ENCODE measurements at regions of chr2 and their contacts with region 1.

Region 1: DNA sequence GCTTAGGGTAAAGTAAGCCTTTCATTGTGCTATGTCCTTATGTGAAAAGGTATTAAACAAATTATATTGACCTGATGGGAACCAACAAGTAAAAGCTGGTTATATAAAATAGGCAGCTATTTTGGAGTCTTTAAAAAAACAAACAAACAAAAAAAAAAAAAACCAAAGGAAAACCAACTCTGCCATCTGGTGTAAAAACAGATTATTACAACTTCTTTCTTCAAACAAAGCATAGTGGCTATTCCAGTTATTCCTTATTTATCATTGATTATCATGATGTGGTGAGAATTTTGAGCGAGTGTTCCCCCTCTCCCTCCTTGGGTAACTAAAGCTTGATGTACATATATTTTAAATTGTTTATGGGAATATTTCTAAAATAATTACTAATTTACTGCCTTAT is 122.4 kb upstream of the FHL2 start:
- DNase-seq: no peak

Region 2: DNA sequence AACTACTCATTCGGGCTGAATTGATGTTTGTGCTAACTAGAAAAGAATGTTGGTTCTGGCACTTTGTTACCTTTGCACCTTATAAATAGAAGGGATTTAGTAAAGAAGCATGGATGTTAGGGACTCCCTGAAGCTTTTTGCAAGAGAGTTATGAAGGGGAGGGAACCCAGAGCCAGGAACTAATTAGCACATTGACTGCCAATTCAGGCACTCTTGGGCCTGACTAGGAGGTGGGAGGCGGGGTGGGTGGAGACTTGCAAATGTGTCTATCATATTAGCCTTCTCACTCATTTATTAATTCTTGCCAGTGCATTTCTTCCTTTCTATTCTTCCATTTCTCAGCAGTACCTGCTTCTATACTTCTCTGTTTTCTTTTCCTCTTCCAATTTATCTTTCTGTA is 1736.9 kb before region 1 on chr2:
- intact Hi-C with region 1: no loop called
- DNase-seq: no peak

Region 3: GRCh38 chr2:104983980-104984379 is 537.2 kb before region 1 on chr2:
- intact Hi-C with region 1: no loop called
- DNase-seq: no peak

Region 4: GRCh38 chr2:105344704-105345345 is 176.4 kb before region 1 on chr2:
- intact Hi-C with region 1: loop called (anchors 5 to 10 kb)
- DNase-seq: no peak

Region 5: DNA sequence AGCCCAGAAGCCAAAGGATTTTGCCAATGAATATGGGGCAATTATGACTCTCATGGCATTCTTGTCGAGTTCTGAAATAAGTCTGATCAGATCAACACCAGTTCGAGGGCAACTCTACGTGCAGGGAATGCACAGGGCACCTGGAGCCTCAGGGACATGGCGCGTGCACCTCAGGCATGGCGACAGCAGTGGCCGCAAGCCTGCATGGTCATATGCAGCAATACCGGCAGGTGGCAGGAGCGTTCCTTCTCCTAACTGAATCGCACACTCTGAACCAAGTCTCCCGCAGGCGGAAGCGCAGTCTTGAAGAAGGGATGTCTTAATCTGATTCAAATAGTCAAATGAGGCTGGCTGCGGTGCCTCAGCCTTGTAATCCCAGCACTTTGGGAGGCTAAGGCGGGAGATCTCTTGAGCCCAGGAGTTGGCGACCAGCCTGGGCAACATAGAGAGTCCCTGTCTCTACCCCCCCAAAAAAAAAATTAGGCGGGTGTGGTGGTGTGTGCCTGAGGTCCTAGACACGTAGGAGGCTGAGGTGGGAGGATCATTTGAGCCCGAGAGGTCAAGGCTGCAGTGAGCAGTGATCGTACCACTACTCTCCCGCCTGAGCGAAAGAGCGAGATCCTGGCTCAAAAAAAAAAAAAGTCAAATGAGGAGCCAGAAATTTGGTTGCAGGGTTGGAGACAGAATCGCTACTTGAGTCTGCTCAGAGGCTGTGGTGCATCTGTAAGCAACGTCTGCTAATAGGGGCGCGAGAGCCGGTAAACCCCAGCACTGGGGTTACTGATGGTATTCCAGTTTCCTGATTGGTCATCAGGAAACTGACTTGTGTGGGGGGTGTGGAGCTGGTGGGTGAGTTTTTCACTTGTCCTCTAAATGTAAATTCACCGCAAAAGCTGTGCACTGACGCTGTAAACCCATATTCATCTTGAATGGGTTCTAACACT is 151.2 kb before region 1 on chr2:
- intact Hi-C with region 1: loop called (anchors 5 to 10 kb)
- DNase-seq: peak; percentile 95

Region 6: DNA sequence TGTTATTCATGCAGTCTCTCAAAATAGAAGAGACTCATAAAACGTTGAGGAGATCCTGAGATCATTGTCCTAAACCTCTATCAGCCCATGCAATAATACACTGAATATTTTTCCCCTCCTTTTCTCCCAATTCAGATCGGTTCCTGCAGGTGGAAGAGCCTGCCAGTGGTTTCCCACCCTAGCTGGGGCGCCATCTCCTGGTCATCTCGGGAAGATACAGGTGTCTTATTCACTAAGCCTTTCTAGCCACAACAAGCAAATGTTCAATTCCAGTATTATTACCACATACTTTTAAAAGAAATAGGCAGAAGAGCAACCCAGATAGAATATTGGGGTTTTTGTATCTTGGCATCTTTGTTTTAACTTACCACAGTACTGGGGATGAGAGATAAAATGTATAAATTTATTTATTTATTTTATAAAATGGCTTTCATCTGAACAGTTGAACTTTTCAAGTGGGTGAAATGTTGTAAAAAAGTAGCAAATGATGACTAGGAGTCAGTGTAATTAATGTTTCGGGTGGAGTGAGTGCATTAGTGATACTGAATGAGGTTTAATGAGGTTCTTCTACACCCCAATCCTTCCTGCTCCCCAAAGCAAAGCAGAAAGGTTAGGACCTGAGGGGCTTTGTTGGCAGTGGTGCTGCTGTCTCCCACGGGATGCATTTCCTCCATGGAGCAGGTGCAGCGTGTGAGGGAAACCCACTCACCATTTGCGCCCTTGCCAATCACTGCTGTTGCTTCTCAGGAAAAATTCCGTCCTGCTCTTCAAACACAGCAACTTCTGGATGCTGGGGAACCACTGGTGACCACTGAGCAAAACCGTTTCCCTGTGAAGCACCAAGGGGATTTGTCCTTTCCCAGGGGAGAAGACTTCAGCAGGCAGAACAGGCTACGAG is 24.8 kb after region 1 on chr2:
- intact Hi-C with region 1: no loop called
- DNase-seq: no peak

Measured in posterior vena cava (tissue), 2 donors.